CD14-positive monocyte (primary cell): ENCODE measurements at regions of chr2 and their contacts with region 1.

Region 1: DNA sequence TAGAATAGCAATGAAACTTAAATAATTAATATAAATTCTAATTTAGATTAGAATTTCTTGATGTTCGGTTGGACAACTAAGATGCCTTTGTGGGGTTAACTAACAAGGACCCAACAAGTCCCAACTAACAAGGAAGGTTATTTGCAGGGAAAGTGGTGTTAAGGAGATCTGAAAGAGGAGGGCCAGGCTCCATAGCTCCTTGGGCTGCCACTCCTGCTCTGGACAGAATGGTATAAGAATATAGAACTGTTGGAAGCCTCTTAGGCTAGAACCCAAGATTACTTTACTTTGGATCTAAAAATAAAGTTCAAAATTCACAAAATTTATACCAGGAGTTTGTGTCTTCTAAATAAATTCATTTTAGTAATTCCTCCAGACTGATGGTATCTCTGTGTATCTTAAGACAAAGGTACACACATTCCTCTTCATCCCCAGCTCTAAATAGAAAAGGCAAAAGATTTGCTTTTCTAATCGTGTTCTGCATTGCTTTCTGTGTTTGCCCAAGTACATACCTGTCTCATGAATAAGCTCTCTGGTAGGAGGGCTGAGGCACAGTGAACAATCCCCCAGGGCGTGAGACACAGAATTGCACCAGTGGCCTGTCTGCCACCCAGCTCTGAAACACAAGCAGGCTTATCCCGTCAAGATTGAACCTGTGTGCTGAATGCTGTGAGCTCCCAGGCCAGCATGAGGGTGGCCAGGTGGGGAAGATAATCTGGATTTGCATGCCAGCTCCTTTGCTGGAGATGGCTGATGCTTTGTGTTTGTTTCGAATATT is 176.0 kb downstream of the ACKR3 start:
- DNase-seq: no peak
- H3K4me3 ChIP-seq: no peak overlapping the region
- H3K4me3 Mint-ChIP-seq: no peak overlapping the region
- H3K27ac ChIP-seq: no peak overlapping the region
- H3K27ac Mint-ChIP-seq: no peak overlapping the region
- H3K4me1 ChIP-seq: peaks cover 61 to 66% of the 10 kb centered on the region in 2 donors
- H3K4me1 Mint-ChIP-seq: peaks cover 67% of the 10 kb centered on the region
- H3K27me3 ChIP-seq: no peaks in the 10 kb centered on the region
- H3K27me3 Mint-ChIP-seq: peaks cover 0 to 4% (median 1%) of the 10 kb centered on the region in 3 donors
- CTCF ChIP-seq: no peak

Region 2: GRCh38 chr2:236705295-236706114 is 40.1 kb before region 1 on chr2:
- intact Hi-C with region 1: loop called (anchors 5 kb)
- DNase-seq: peak; percentile 41 to 69 (median 48)
- H3K4me3 ChIP-seq: peak overlapping the region in 1 of 3 experiments; percentile 16
- H3K4me3 Mint-ChIP-seq: peak overlapping the region in 1 of 2 donors; percentile 59
- H3K27ac ChIP-seq: peak overlapping the region in 1 of 2 donors; percentile 50
- H3K27ac Mint-ChIP-seq: peak overlapping the region in 6 of 7 donors; percentile 35 to 82 (median 54)
- H3K4me1 ChIP-seq: peaks cover 24 to 31% of the 10 kb centered on the region in 2 donors
- H3K4me1 Mint-ChIP-seq: peaks cover 37% of the 10 kb centered on the region
- H3K27me3 ChIP-seq: no peaks in the 10 kb centered on the region
- H3K27me3 Mint-ChIP-seq: peaks cover 3 to 15% (median 3%) of the 10 kb centered on the region in 3 donors
- CTCF ChIP-seq: no peak

Region 3: DNA sequence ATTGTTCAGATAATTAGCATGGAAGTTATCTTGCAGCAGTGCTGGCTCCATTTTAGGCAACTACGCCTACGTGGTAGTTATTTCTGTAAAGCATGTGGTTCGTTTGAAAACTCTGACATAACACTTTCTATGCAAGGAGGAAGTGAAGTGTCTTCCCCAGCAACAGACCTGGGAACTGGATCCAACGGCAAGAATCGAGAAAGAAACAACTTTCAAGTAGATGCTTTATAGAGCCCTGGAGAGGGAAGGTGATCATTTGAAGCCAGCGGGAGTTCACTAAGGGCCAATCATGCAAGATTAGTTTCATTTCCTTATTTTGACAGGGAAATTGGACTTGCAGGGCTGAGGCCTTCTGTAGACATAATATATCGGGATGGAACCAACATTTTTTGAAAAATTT is 42.3 kb after region 1 on chr2:
- intact Hi-C with region 1: loop called in 1 of 2 experiments (anchors 5 kb)
- DNase-seq: peak; percentile 83 to 90 (median 87)
- H3K4me3 ChIP-seq: peak overlapping the region in 1 of 3 experiments; percentile 10
- H3K4me3 Mint-ChIP-seq: peak overlapping the region in 1 of 2 donors; percentile 26
- H3K27ac ChIP-seq: peak overlapping the region in 1 of 2 donors; percentile 47
- H3K27ac Mint-ChIP-seq: peak overlapping the region; percentile 76 to 92 (median 89)
- H3K4me1 ChIP-seq: peaks cover 22 to 24% of the 10 kb centered on the region in 2 donors
- H3K4me1 Mint-ChIP-seq: peaks cover 22% of the 10 kb centered on the region
- H3K27me3 ChIP-seq: peaks cover 11 to 24% of the 10 kb centered on the region in 2 donors
- H3K27me3 Mint-ChIP-seq: peaks cover 33 to 38% (median 35%) of the 10 kb centered on the region in 3 donors
- CTCF ChIP-seq: no peak